ENCODE measurements at regions of chr14 and their contacts with region 1.

Region 1: DNA sequence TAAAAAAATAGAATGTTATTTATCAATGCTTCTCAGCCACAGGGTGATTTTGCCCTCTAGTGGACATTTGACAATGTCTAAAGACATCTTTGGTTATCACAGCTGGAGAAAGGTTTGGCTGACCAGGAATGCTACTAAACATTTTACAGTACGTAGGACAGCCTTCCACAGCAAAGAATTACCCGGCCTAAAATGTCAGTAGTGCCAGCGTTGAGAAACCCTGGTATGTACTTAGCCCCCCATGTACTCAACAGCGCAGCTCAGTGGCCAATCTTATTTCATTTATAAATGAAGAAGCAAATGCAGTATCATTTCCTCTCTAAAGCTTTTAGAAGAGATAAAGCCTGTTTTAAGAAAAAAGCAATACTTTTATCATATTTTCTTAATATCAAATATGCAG is 5.8 kb downstream of the MARK3 start:
- DNase-seq: no peak
- ATAC-seq: peak; percentile 68
- H3K4me3 ChIP-seq: no peak overlapping the region
- H3K27ac ChIP-seq: no peak overlapping the region
- H3K4me1 ChIP-seq: peaks cover 22% of the 10 kb centered on the region
- H3K27me3 ChIP-seq: no peaks in the 10 kb centered on the region
- CTCF ChIP-seq: peak; percentile 58 to 78 (median 67)
- EP300 ChIP-seq: no peak
- POLR2A ChIP-seq: no peak
- RAD21 ChIP-seq: peak; percentile 29; the same call in 1 of the 2 replicates

Region 2: DNA sequence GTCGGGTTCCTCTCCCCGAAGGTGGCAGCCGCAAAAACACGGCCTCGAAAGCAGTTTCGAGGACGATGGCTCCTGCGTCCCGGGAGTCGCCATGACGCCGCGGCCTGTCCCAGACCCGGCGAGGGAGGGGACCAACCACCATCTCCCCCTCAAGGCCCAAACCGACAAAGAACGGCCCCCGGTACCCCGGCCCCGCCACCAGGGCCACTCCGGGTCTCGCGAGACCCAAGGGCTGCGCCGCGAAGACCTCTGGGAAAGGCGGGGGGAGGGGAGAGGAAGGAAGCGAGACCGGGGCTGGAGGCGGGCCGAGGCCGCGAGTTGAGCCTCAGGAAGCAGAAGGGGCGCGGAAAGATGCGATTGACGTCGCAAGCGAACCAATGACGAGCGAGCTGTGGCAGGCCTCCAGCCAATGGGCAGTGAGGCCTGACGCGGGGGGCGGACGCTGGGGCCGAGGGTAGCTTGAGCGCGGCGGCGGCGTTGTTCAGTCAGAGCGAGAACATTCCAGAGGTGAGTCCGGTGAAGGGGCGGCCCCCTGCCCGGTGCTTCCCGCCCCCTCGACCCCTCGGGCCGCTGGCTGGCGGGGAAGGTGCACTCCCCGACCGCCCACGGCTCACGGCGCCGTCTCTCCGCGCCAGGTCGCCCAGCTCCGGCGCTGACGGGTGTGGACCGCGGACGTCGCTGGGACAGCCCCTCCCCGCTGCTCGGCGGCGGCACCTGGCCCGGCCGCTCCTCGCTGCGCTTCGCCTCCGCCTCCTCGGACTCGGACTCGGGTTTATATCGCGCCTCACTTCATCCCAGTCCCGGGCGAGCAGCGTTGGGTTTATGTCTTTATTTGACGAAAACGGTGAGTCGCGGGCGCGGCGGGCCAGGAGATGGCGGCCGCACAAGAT is 57.0 kb before region 1 on chr14 and contains the start of gene EIF5:
- CTCF ChIA-PET with region 1: interaction called, 38 read pairs
- POLR2A ChIA-PET with region 1: interaction called, 5 read pairs
- RAD21 ChIA-PET with region 1: interaction called, 10 read pairs
- SMC1A ChIA-PET with region 1: interaction called, 6 read pairs
- in situ Hi-C with region 1: no loop called
- intact Hi-C with region 1: loop called (anchors 5 kb)
- DNase-seq: peak; percentile 95
- ATAC-seq: peak; percentile 95
- H3K4me3 ChIP-seq: peak within 1 kb of the TSS; percentile 99
- H3K27ac ChIP-seq: peak within 1 kb of the TSS; percentile 98
- H3K4me1 ChIP-seq: peaks cover 25% of the 10 kb centered on the region; the same call in 1 of the 2 replicates
- H3K27me3 ChIP-seq: no peaks in the 10 kb centered on the region
- CTCF ChIP-seq: peak in 1 of 3 experiments; percentile 17; a peak in 1 of 6 replicates
- EP300 ChIP-seq: no peak; a peak in 1 of 4 replicates
- POLR2A ChIP-seq: peak; percentile 98
- RAD21 ChIP-seq: no peak
- polyA plus RNA-seq, gene EIF5: 51.2 to 80.9 TPM

Region 3: GRCh38 chr14:103343905-103344797 is 46.9 kb before region 1 on chr14:
- CTCF ChIA-PET with region 1: interaction called, 38 read pairs
- POLR2A ChIA-PET with region 1: interaction called, 4 read pairs
- RAD21 ChIA-PET with region 1: interaction called, 12 read pairs
- SMC1A ChIA-PET with region 1: interaction called, 3 read pairs
- in situ Hi-C with region 1: no loop called
- intact Hi-C with region 1: no loop called
- DNase-seq: no peak
- ATAC-seq: peak; percentile 6; the same call in 2 of the 3 replicates
- H3K4me3 ChIP-seq: no peak overlapping the region
- H3K27ac ChIP-seq: no peak overlapping the region
- H3K4me1 ChIP-seq: no peaks in the 10 kb centered on the region
- H3K27me3 ChIP-seq: no peaks in the 10 kb centered on the region
- CTCF ChIP-seq: no peak
- EP300 ChIP-seq: no peak
- POLR2A ChIP-seq: peak; percentile 6; the same call in 1 of the 2 replicates
- RAD21 ChIP-seq: no peak

Region 4: GRCh38 chr14:103401223-103402214 is 10.5 kb after region 1 on chr14:
- CTCF ChIA-PET with region 1: interaction called, 99 read pairs
- POLR2A ChIA-PET with region 1: interaction called, 3 read pairs
- RAD21 ChIA-PET with region 1: no interaction called
- SMC1A ChIA-PET with region 1: interaction called, 21 read pairs
- in situ Hi-C with region 1: no loop called
- intact Hi-C with region 1: no loop called
- DNase-seq: no peak
- ATAC-seq: peak; percentile 79
- H3K4me3 ChIP-seq: peak overlapping the region; percentile 48; the same call in 1 of the 2 replicates
- H3K27ac ChIP-seq: peak overlapping the region; percentile 12
- H3K4me1 ChIP-seq: peaks cover 26% of the 10 kb centered on the region
- H3K27me3 ChIP-seq: no peaks in the 10 kb centered on the region
- CTCF ChIP-seq: no peak
- EP300 ChIP-seq: no peak
- POLR2A ChIP-seq: no peak
- RAD21 ChIP-seq: no peak

Region 5: DNA sequence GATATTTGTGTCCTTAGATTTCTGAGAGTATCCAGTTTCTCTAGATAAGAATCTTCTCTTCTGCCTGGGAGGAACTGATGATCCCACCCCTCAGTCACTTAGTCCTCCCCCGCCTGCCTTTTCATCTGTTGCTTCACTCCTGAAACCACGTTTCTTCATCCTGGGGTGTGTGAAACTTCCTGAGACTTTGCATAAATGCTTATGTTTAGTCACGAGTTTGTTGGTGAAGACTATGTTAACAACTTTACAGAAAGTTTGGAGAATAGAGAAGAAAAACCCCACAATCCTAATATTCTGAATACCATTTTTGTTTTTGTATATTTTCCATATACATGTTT is 27.4 kb after region 1 on chr14:
- CTCF ChIA-PET with region 1: interaction called, 62 read pairs
- POLR2A ChIA-PET with region 1: interaction called, 4 read pairs
- RAD21 ChIA-PET with region 1: interaction called, 4 read pairs
- SMC1A ChIA-PET with region 1: interaction called, 22 read pairs
- in situ Hi-C with region 1: no loop called
- intact Hi-C with region 1: no loop called
- DNase-seq: no peak
- ATAC-seq: peak; percentile 62
- H3K4me3 ChIP-seq: peak overlapping the region; percentile 46
- H3K27ac ChIP-seq: peak overlapping the region; percentile 22; the same call in 1 of the 2 replicates
- H3K4me1 ChIP-seq: peaks cover 16% of the 10 kb centered on the region; the same call in 1 of the 2 replicates
- H3K27me3 ChIP-seq: no peaks in the 10 kb centered on the region
- CTCF ChIP-seq: no peak
- EP300 ChIP-seq: no peak
- POLR2A ChIP-seq: no peak
- RAD21 ChIP-seq: no peak

Region 6: GRCh38 chr14:103427485-103428443 is 36.7 kb after region 1 on chr14:
- CTCF ChIA-PET with region 1: interaction called, 10 read pairs
- POLR2A ChIA-PET with region 1: interaction called, 7 read pairs
- RAD21 ChIA-PET with region 1: interaction called, 4 read pairs
- SMC1A ChIA-PET with region 1: interaction called, 5 read pairs
- in situ Hi-C with region 1: no loop called
- intact Hi-C with region 1: no loop called
- DNase-seq: peak; percentile 36
- ATAC-seq: peak; percentile 78
- H3K4me3 ChIP-seq: no peak overlapping the region
- H3K27ac ChIP-seq: peak overlapping the region; percentile 56
- H3K4me1 ChIP-seq: peaks cover 11% of the 10 kb centered on the region
- H3K27me3 ChIP-seq: no peaks in the 10 kb centered on the region
- CTCF ChIP-seq: no peak
- EP300 ChIP-seq: no peak
- POLR2A ChIP-seq: no peak
- RAD21 ChIP-seq: no peak

Measured in GM12878 (cell line).